CD14-positive monocyte (primary cell): ENCODE measurements at regions of chr12 and their contacts with region 1.

Region 1: DNA sequence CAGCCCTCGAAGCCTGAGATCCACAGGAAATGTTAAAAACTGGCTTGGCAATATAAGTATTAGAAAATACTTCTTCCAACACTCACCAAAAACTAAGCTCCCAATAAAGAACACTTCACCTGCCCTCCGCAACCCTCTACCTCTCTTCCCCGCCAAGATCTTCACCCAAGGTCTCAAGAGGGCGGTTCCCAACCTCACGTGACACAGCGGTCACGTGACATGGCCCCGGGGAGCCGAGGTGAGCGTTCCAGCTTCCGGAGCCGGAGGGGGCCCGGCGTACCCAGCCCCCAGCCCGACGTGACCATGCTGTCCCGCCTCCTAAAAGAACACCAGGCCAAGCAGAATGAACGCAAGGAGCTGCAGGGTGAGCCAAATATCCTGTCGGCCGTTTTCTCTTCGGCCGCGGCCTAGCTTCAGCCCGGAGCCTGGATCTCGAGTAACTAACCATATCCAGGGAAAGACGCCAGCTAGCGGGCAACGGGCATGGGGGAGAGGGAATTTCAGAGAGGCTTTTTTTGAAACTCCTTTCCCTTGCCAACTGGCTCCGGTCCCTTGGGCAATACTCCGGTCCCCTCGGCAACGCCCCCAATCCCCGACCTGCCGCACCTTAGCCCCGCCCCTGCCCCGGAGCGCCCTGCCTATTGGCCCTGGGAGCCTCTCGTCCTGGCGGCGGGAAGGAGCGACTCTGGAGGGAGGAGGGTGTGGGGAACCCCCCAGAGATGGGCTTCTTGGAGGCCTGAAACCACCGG is at the start of gene BLOC1S1:
- DNase-seq: peak; percentile 73 to 79 (median 77)
- H3K4me3 ChIP-seq: peak within 1 kb of the TSS; percentile 70 to 93 (median 76)
- H3K4me3 Mint-ChIP-seq: peak within 1 kb of the TSS; percentile 88 to 94
- H3K27ac ChIP-seq: peak within 1 kb of the TSS; percentile 84 to 92
- H3K27ac Mint-ChIP-seq: peak within 1 kb of the TSS; percentile 87 to 97 (median 93)
- H3K4me1 ChIP-seq: peaks cover 26 to 49% of the 10 kb centered on the region in 2 donors
- H3K4me1 Mint-ChIP-seq: peaks cover 50% of the 10 kb centered on the region
- H3K27me3 ChIP-seq: peaks cover 0 to 20% of the 10 kb centered on the region in 2 donors
- H3K27me3 Mint-ChIP-seq: peaks cover 11 to 21% (median 19%) of the 10 kb centered on the region in 3 donors
- CTCF ChIP-seq: no peak
- polyA plus RNA-seq, gene BLOC1S1: 222 to 358 (median 223) TPM

Region 2: GRCh38 chr12:55681142-55682077 is 34.6 kb before region 1 on chr12:
- intact Hi-C with region 1: loop called in 1 of 2 experiments (anchors 5 kb)
- DNase-seq: peak; percentile 17 to 47 (median 34)
- H3K4me3 ChIP-seq: peak overlapping the region; percentile 1 to 60 (median 31)
- H3K4me3 Mint-ChIP-seq: peak overlapping the region; percentile 72 to 93
- H3K27ac ChIP-seq: no peak overlapping the region
- H3K27ac Mint-ChIP-seq: peak overlapping the region in 4 of 7 donors; percentile 26 to 85 (median 72)
- H3K4me1 ChIP-seq: peaks cover 28 to 36% of the 10 kb centered on the region in 2 donors
- H3K4me1 Mint-ChIP-seq: peaks cover 38% of the 10 kb centered on the region
- H3K27me3 ChIP-seq: no peaks in the 10 kb centered on the region
- H3K27me3 Mint-ChIP-seq: peaks cover 4 to 7% (median 4%) of the 10 kb centered on the region in 3 donors
- CTCF ChIP-seq: peak; percentile 36

Region 3: GRCh38 chr12:55771736-55772135 is 55.7 kb after region 1 on chr12:
- intact Hi-C with region 1: no loop called
- DNase-seq: no peak
- H3K4me3 ChIP-seq: no peak overlapping the region
- H3K4me3 Mint-ChIP-seq: no peak overlapping the region
- H3K27ac ChIP-seq: no peak overlapping the region
- H3K27ac Mint-ChIP-seq: no peak overlapping the region
- H3K4me1 ChIP-seq: no peaks in the 10 kb centered on the region
- H3K4me1 Mint-ChIP-seq: no peaks in the 10 kb centered on the region
- H3K27me3 ChIP-seq: no peaks in the 10 kb centered on the region
- H3K27me3 Mint-ChIP-seq: no peaks in the 10 kb centered on the region
- CTCF ChIP-seq: no peak